IMR-90 (cell line): ENCODE measurements at regions of chr15 and their contacts with region 1.

Region 1: GRCh38 chr15:48855501-48856440 is 22.2 kb upstream of the EID1 start:
- DNase-seq: peak; percentile 62
- ATAC-seq: peak; percentile 70
- H3K4me3 ChIP-seq: no peak overlapping the region
- H3K27ac ChIP-seq: no peak overlapping the region; the same call in 1 of the 2 replicates
- H3K4me1 ChIP-seq: peaks cover 14% of the 10 kb centered on the region
- H3K27me3 ChIP-seq: no peaks in the 10 kb centered on the region
- CTCF ChIP-seq: peak; percentile 56
- POLR2A ChIP-seq: no peak
- RAD21 ChIP-seq: peak; percentile 54; the same call in 1 of the 2 replicates

Region 2: GRCh38 chr15:48266024-48266689 is 589.6 kb before region 1 on chr15:
- CTCF ChIA-PET with region 1: no interaction called
- POLR2A ChIA-PET with region 1: no interaction called
- dilution Hi-C with region 1: no loop called
- in situ Hi-C with region 1: no loop called
- intact Hi-C with region 1: no loop called
- DNase-seq: no peak
- ATAC-seq: no peak
- H3K4me3 ChIP-seq: no peak overlapping the region
- H3K27ac ChIP-seq: no peak overlapping the region
- H3K4me1 ChIP-seq: no peaks in the 10 kb centered on the region
- H3K27me3 ChIP-seq: peaks cover 9% of the 10 kb centered on the region
- CTCF ChIP-seq: no peak
- POLR2A ChIP-seq: no peak
- RAD21 ChIP-seq: no peak

Region 3: DNA sequence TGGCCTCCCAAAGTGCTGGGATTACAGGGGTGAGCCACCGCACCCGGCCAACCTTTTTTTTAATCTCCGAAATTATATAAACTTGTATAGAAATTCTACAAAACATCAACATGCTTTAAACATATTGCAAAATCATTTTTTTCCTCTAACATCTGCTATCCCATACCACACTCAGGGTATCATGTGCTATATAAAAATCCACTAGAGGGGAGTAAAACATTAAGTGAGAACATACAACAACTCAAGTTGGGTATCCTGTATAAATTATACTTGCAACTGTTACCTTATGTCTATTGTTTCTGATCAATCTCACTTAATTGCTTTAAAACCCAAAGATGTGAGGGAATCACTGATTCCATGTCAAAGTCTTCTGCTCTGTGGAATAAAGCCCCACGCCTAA is 138.3 kb before region 1 on chr15:
- CTCF ChIA-PET with region 1: no interaction called
- POLR2A ChIA-PET with region 1: no interaction called
- dilution Hi-C with region 1: no loop called
- in situ Hi-C with region 1: no loop called
- intact Hi-C with region 1: loop called (anchors 2 kb)
- DNase-seq: peak; percentile 59
- ATAC-seq: peak; percentile 76
- H3K4me3 ChIP-seq: no peak overlapping the region
- H3K27ac ChIP-seq: no peak overlapping the region
- H3K4me1 ChIP-seq: peaks cover 11% of the 10 kb centered on the region
- H3K27me3 ChIP-seq: no peaks in the 10 kb centered on the region
- CTCF ChIP-seq: peak; percentile 62
- POLR2A ChIP-seq: no peak
- RAD21 ChIP-seq: peak; percentile 66